Caco-2 (cell line): ENCODE measurements at regions of chr1 and their contacts with region 1.

Region 1: GRCh38 chr1:59560807-59561450 is 253.8 kb upstream of the HOOK1 start:
- DNase-seq: no peak
- H3K4me3 ChIP-seq: no peak overlapping the region
- H3K4me3 Mint-ChIP-seq: no peak overlapping the region
- H3K27ac Mint-ChIP-seq: no peak overlapping the region
- H3K4me1 ChIP-seq: no peaks in the 10 kb centered on the region
- H3K4me1 Mint-ChIP-seq: no peaks in the 10 kb centered on the region
- H3K27me3 ChIP-seq: no peaks in the 10 kb centered on the region
- H3K27me3 Mint-ChIP-seq: no peaks in the 10 kb centered on the region
- CTCF ChIP-seq: no peak

Region 2: DNA sequence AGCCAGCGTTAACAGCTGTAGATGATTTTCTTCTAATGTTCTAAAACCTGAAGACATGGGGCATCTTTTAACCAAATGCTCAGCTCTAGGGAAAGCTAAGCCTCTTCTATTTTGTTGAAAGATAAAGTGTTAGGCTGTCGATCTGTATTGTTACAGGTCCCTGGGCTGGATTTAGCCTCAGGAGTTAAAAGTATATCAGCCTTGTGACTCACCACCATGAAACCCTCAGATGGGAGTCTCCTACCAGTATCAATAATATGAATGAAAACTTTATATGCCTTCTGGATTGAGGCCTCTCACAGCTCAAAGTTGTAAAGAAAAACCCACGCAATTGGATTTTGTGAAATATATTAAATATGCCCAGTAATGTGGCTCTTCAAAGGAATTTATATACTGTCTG is 32.5 kb before region 1 on chr1:
- CTCF ChIA-PET with region 1: no interaction called
- POLR2A ChIA-PET with region 1: no interaction called
- intact Hi-C with region 1: loop called (anchors 1 kb)
- DNase-seq: no peak
- H3K4me3 ChIP-seq: no peak overlapping the region
- H3K4me3 Mint-ChIP-seq: no peak overlapping the region
- H3K27ac Mint-ChIP-seq: no peak overlapping the region
- H3K4me1 ChIP-seq: no peaks in the 10 kb centered on the region
- H3K4me1 Mint-ChIP-seq: no peaks in the 10 kb centered on the region
- H3K27me3 ChIP-seq: no peaks in the 10 kb centered on the region
- H3K27me3 Mint-ChIP-seq: no peaks in the 10 kb centered on the region
- CTCF ChIP-seq: no peak

Region 3: DNA sequence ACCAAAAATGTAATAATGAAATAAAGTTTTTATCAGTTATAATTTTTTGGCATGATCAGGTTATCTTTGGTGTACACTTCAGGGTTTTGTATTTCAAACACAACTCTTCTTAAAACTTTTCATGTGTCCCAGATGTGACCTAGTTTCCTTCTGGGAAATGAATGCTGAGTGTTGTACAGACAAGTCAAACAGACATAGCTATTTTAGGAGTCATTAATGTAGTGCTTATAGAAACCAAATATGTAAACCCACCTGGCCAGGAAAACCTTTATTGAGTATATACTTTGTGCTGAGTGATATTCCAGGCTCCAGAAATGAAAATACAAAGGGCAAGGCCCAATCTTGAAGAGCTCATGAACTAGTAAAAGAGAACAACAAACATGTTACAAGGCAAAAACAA is 227.9 kb after region 1 on chr1:
- CTCF ChIA-PET with region 1: no interaction called
- POLR2A ChIA-PET with region 1: no interaction called
- intact Hi-C with region 1: no loop called
- DNase-seq: no peak
- H3K4me3 ChIP-seq: no peak overlapping the region
- H3K4me3 Mint-ChIP-seq: no peak overlapping the region
- H3K27ac Mint-ChIP-seq: no peak overlapping the region
- H3K4me1 ChIP-seq: no peaks in the 10 kb centered on the region
- H3K4me1 Mint-ChIP-seq: no peaks in the 10 kb centered on the region
- H3K27me3 ChIP-seq: no peaks in the 10 kb centered on the region
- H3K27me3 Mint-ChIP-seq: peaks cover 6% of the 10 kb centered on the region
- CTCF ChIP-seq: no peak